AG04449 (cell line): ENCODE measurements at regions of chr6 and their contacts with region 1.

Region 1: GRCh38 chr6:10800829-10801535 is 37.4 kb downstream of the MAK start:
- DNase-seq: no peak
- H3K4me3 ChIP-seq: no peak overlapping the region
- CTCF ChIP-seq: peak; percentile 91

Region 2: DNA sequence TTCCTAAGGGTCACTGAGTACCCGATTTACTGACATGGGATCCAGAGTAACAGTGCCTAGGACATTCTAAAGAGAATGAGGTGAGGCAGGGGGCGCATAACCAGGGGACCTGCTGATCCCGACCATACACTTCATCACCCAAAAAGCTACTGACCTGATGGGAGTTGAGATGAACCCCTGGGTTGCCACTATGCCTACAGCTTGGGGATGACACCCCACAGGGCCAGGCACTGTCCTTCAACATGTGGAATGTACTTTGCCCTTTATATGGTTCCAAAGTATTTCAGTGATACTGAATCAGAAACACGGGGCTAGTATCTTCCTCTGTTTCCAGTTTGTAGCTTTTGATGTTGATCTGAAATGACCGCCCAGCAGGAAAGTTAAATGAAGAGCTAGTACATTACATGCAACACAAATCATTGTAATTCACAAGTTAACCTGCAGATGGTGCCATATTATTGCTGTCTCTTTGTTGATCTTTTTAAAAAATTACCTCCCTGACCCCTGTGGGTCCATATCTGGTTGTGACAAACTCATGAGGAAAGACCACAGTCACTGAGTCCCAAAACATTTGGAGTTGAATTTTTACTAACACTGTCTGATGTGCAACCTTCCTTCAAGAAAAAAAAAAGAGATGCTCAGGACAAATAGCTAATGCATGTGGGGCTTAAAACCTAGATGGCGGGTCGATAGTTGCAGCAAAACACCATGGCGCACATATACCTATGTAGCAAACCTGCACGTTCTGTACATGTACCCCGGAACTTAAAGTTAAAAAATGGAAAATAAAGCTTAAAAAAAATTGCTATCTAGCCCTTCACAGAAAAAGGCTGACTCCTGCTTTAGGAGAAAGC is 322.6 kb before region 1 on chr6:
- CTCF ChIA-PET with region 1: interaction called, 103 read pairs
- POLR2A ChIA-PET with region 1: no interaction called
- DNase-seq: no peak
- H3K4me3 ChIP-seq: no peak overlapping the region
- CTCF ChIP-seq: peak; percentile 28

Region 3: GRCh38 chr6:10510592-10511367 is 290.2 kb before region 1 on chr6:
- CTCF ChIA-PET with region 1: interaction called, 11 read pairs
- POLR2A ChIA-PET with region 1: no interaction called
- DNase-seq: no peak
- H3K4me3 ChIP-seq: no peak overlapping the region
- CTCF ChIP-seq: peak; percentile 56

Region 4: GRCh38 chr6:10831609-10832008 is 30.6 kb after region 1 on chr6:
- CTCF ChIA-PET with region 1: no interaction called
- POLR2A ChIA-PET with region 1: no interaction called
- DNase-seq: no peak
- H3K4me3 ChIP-seq: no peak overlapping the region
- CTCF ChIP-seq: no peak